PC-9 (cell line): ENCODE measurements at regions of chr14 and their contacts with region 1.

Region 1: DNA sequence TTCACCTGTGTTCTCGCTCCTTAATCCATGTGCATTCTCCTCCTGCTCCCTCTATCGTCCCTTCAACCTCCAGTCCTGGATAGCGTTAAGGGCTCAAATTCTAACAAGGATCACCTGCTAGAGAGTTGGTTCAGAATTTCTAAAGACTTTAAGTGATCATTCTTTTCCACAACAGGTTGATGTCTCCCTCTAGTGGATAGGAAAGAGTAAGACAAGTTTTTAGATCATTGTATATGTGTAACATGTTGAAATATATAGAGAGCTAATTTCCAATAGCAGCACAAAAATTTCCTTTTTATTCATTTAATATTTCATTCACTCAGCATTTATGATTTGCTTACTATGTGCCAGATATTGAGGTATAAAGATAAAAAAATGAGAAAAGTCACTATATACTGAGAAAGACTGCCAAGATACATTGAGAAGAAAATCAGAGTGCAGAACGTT is 9.3 kb upstream of the ESR2 start:
- DNase-seq: peak; percentile 21 to 72
- H3K4me3 ChIP-seq: no peak overlapping the region
- H3K27ac ChIP-seq: no peak overlapping the region
- H3K4me1 ChIP-seq: no peaks in the 10 kb centered on the region
- H3K27me3 ChIP-seq: no peaks in the 10 kb centered on the region
- CTCF ChIP-seq: peak; percentile 96

Region 2: GRCh38 chr14:63308723-63309317 is 994.7 kb before region 1 on chr14:
- CTCF ChIA-PET with region 1: no interaction called
- POLR2A ChIA-PET with region 1: no interaction called
- intact Hi-C with region 1: loop called (anchors 10 kb)
- DNase-seq: peak in 1 of 2 experiments; percentile 31
- H3K4me3 ChIP-seq: no peak overlapping the region
- H3K27ac ChIP-seq: no peak overlapping the region
- H3K4me1 ChIP-seq: no peaks in the 10 kb centered on the region
- H3K27me3 ChIP-seq: 0 out of 2 replicates have a peak, but pooled peaks cover 3% of the 10 kb centered on the region
- CTCF ChIP-seq: peak; percentile 73

Region 3: GRCh38 chr14:63388763-63389431 is 914.6 kb before region 1 on chr14:
- CTCF ChIA-PET with region 1: no interaction called
- POLR2A ChIA-PET with region 1: no interaction called
- intact Hi-C with region 1: loop called (anchors 1 kb)
- DNase-seq: peak in 1 of 2 experiments; percentile 57
- H3K4me3 ChIP-seq: no peak overlapping the region
- H3K27ac ChIP-seq: no peak overlapping the region
- H3K4me1 ChIP-seq: no peaks in the 10 kb centered on the region
- H3K27me3 ChIP-seq: no peaks in the 10 kb centered on the region
- CTCF ChIP-seq: peak; percentile 84

Region 4: GRCh38 chr14:63800651-63801375 is 502.7 kb before region 1 on chr14:
- CTCF ChIA-PET with region 1: no interaction called
- POLR2A ChIA-PET with region 1: no interaction called
- intact Hi-C with region 1: loop called (anchors 2 kb)
- DNase-seq: no peak
- H3K4me3 ChIP-seq: no peak overlapping the region
- H3K27ac ChIP-seq: no peak overlapping the region
- H3K4me1 ChIP-seq: 0 out of 2 replicates have a peak, but pooled peaks cover 4% of the 10 kb centered on the region
- H3K27me3 ChIP-seq: no peaks in the 10 kb centered on the region
- CTCF ChIP-seq: no peak

Region 5: DNA sequence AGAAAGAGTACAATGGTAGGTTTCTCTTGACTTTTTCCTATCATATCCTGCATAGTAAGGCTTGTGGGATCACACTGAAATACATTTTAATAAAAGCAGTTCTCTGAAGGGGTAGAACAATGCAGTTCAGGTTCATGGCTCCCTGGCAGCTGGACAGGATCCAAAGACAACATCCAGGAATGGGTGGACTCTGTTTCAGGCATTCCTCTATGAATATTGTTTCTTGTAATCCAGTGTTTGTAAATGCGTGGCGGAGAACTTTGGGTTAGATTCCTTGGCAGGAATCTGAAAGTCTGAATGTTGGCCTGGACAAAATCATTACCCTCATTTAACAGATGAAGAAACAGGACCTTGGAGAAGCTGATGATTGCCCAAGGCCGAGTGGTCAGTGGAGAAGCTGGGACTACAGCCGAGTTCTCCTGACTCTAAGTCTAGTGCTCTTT is 407.2 kb before region 1 on chr14:
- CTCF ChIA-PET with region 1: no interaction called
- POLR2A ChIA-PET with region 1: interaction called, 10 read pairs
- intact Hi-C with region 1: no loop called
- DNase-seq: peak; percentile 84 to 86
- H3K4me3 ChIP-seq: no peak overlapping the region
- H3K27ac ChIP-seq: peak overlapping the region; percentile 1
- H3K4me1 ChIP-seq: peaks cover 14% of the 10 kb centered on the region
- H3K27me3 ChIP-seq: no peaks in the 10 kb centered on the region
- CTCF ChIP-seq: no peak

Region 6: GRCh38 chr14:64005822-64006221 is 297.7 kb before region 1 on chr14:
- CTCF ChIA-PET with region 1: interaction called, 7 read pairs
- POLR2A ChIA-PET with region 1: no interaction called
- intact Hi-C with region 1: loop called (anchors 2 kb)
- DNase-seq: no peak
- H3K4me3 ChIP-seq: no peak overlapping the region
- H3K27ac ChIP-seq: no peak overlapping the region
- H3K4me1 ChIP-seq: no peaks in the 10 kb centered on the region
- H3K27me3 ChIP-seq: no peaks in the 10 kb centered on the region
- CTCF ChIP-seq: no peak